Activated T-helper 1 cell treated with anti-CD3 and anti-CD28 coated beads, Interleukin-12 subunit alpha, Interleukin-12 subunit beta, Interleukin-2, Interleukin-4 antibody, amounts not matched to agents 30 ng/mL and 10 ng/mL and 1 ng/mL, durations not matched to agents 14 hours and 24 hours and 36 hours (primary cell): ENCODE measurements at regions of chr5 and their contacts with region 1.

Region 1: GRCh38 chr5:31854181-31855133 is 215.5 kb downstream of the PDZD2 start:
- DNase-seq: no peak
- H3K4me3 Mint-ChIP-seq: peak overlapping the region; percentile 68
- H3K27ac Mint-ChIP-seq: no peak overlapping the region
- H3K4me1 Mint-ChIP-seq: peaks cover 8% of the 10 kb centered on the region
- H3K27me3 Mint-ChIP-seq: peaks cover 24% of the 10 kb centered on the region

Region 2: DNA sequence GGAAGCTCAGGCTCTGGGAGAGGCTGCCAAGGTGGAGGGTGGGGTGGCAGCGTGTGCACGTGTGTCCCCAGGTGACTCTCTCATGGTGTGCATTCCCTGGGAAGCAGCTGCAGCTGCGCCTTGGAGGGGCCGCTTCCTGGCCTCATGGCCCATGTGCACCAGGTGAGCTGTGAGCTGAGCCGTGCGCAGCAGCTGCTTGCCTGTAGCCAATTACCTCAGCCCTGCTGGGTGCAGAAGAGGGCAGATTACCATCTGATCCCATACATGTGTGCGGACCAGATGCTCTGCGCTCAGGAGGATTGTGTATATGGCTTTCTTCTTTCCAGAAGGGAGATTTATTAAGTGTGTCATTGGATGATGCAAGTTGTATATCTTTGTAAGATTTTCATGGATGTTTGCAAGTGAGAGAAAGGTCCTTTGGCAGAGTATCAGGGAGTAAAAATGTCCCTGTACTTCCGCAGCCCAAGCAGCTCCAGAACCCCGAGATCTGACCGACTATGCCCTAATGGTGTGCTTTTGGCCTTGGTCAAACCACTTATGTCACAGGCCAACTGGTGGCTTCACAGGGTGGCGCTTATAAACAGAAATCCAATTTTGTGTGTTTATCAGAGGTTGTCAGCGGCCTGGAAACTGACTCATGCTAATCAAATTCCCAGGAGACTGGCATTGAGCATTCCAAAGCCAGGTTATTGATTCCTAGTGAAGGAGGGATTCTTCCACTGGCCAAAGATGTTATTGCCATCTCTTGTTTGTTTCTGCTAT is 90.4 kb after region 1 on chr5:
- intact Hi-C with region 1: no loop called
- DNase-seq: no peak
- H3K4me3 Mint-ChIP-seq: no peak overlapping the region
- H3K27ac Mint-ChIP-seq: no peak overlapping the region
- H3K4me1 Mint-ChIP-seq: no peaks in the 10 kb centered on the region
- H3K27me3 Mint-ChIP-seq: no peaks in the 10 kb centered on the region

Region 3: GRCh38 chr5:32726086-32726557 is 871.7 kb after region 1 on chr5:
- intact Hi-C with region 1: loop called (anchors 5 kb)
- DNase-seq: no peak
- H3K4me3 Mint-ChIP-seq: no peak overlapping the region
- H3K27ac Mint-ChIP-seq: no peak overlapping the region
- H3K4me1 Mint-ChIP-seq: no peaks in the 10 kb centered on the region
- H3K27me3 Mint-ChIP-seq: peaks cover 14% of the 10 kb centered on the region